AG04449 (cell line): ENCODE measurements at regions of chr15 and their contacts with region 1.

Region 1: DNA sequence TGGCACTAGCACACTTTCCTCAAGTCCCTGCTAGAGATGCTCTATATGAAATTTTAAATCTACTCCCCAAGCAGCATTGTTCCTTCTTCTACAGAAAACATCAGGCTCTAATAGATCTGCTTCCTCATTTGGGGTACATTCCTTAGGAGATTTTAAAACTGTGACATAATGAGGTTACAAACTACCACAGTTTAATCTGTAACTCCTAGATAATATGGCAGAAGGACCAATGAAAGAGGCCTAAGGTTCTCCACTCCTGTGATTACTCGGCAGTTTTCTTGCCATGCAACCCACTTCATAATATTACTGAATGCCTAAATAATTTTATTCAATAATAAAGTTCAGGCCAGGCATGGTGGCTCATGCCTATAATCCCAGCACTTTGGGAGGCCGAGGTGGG is 16.1 kb downstream of the ZNF106 start:
- DNase-seq: no peak
- H3K4me3 ChIP-seq: no peak overlapping the region
- CTCF ChIP-seq: no peak

Region 2: DNA sequence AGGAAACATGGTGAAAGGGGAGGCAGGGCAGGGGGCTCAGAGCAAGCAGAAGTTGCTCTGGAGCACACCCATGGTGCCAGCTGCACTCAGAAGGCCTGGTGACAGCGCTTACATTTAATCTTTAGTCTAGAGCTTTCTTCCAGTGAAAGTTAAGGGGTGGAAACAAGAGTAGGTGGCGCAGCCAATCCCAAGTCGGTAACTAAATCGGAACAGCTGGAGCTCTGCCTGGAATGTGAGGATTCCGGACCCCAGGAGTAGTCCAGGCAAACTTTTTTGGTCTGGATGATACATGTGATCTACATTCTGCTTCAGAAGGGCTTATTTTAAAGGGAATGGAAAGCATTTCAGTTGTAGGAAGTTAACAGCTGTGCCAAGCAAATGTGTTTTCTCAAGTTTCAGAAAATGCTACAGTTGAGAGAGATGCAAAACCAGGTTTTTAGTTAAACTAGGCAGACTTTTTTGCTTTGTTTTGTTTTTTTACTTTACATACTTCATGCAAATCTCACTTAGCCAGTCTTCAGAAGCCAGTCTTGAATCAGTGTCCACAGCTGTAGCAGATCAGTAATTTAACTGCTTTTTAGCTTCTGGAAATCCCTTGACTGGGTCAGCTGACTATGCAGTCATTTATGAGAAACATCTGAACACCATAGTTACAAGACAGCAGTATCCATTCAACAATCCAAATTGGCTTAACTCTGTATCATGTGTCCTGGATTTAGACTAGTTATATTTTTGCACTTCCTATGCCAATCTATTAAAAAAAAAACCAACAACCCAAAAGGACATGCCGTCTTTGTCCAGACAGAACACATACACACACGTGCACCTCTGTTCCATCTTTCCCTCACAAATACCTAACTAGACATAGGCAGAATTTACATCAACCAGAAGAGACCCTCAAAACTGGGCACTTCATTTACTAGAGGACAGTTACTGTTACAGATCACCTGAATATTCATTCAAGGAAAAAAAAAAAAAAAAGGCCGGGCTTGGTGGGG is 17.1 kb before region 1 on chr15:
- CTCF ChIA-PET with region 1: interaction called, 11 read pairs
- POLR2A ChIA-PET with region 1: no interaction called
- DNase-seq: peak; percentile 84
- H3K4me3 ChIP-seq: peak overlapping the region; percentile 45
- CTCF ChIP-seq: no peak

Region 3: DNA sequence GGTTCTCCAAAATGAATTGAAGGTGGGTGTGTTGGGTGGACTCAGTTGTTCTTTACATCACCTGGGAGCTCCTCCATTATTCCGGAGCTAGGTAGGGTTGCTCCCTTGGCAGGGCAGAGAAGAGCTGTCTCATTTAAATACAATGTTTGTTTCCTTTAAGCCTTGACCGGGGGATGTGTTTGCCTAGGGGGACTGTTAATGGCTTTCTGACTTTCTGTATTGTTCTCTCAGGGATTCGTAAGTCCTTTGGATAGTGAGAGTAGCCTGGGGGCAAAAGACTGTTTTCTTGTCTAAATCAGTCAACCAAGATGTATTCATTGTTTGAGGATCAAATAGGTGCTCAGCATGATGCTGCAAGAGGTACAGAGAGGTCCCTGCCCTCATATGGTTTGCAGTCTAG is 191.0 kb after region 1 on chr15:
- CTCF ChIA-PET with region 1: no interaction called
- POLR2A ChIA-PET with region 1: no interaction called
- DNase-seq: no peak
- H3K4me3 ChIP-seq: no peak overlapping the region
- CTCF ChIP-seq: no peak